ENCODE measurements at regions of chr17 and their contacts with region 1.

Region 1: DNA sequence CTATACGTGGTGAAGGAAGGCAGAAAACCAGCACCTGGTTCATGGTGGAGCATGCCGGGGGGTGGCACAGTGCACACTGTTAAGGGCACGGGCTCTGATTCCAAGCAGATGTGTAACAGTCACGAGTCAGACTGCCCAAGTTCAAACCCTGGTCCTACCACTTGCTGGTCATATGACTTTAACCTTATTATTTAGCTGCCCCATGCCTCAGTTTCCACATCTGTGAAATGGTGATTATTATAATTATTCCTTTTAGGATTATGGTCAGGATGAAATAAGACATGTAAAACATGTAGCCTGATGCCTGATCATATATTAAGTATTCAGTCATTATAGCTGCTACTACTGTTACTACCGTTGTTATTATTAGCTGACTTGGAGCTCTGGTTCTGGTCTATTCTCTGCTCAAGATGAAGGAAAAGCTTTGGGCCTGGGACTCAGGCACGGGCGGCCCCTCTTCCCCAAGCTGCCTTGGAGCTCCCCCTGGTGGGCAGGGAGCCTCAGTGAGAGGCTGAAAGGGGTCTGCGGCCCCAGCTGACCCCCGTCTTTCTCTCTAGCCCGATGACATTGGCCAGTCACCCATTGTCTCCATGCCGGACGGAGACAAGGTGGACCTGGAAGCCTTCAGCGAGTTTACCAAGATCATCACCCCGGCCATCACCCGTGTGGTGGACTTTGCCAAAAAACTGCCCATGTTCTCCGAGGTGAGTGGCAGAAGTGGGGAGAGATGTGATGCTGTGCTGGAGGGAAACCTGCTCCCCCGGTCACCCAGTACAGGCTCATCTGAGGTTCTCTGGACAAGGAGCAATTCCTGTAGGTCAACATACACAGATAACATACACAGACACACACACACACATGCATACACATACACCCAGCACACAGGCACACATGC is 14.0 kb downstream of the NR1D1 start:
- DNase-seq: peak; percentile 100
- H3K4me3 Mint-ChIP-seq: no peak overlapping the region
- H3K27ac Mint-ChIP-seq: no peak overlapping the region
- H3K4me1 Mint-ChIP-seq: no peaks in the 10 kb centered on the region
- H3K27me3 Mint-ChIP-seq: no peaks in the 10 kb centered on the region
- CTCF ChIP-seq: no peak

Region 2: GRCh38 chr17:40026816-40027613 is 59.4 kb before region 1 on chr17:
- CTCF ChIA-PET with region 1: interaction called, 40 read pairs
- intact Hi-C with region 1: loop called (anchors 1 kb)
- DNase-seq: peak; percentile 100
- H3K4me3 Mint-ChIP-seq: no peak overlapping the region
- H3K27ac Mint-ChIP-seq: no peak overlapping the region
- H3K4me1 Mint-ChIP-seq: peaks cover 30% of the 10 kb centered on the region
- H3K27me3 Mint-ChIP-seq: no peaks in the 10 kb centered on the region
- CTCF ChIP-seq: no peak

Region 3: GRCh38 chr17:40062329-40063186 is 23.8 kb before region 1 on chr17 and contains the start of gene THRA:
- CTCF ChIA-PET with region 1: interaction called, 1,006 read pairs
- intact Hi-C with region 1: loop called (anchors 1 kb)
- DNase-seq: peak; percentile 100
- H3K4me3 Mint-ChIP-seq: peak within 1 kb of the TSS; percentile 54
- H3K27ac Mint-ChIP-seq: peak within 1 kb of the TSS; percentile 27
- H3K4me1 Mint-ChIP-seq: peaks cover 55% of the 10 kb centered on the region
- H3K27me3 Mint-ChIP-seq: peaks cover 52% of the 10 kb centered on the region
- CTCF ChIP-seq: no peak
- total RNA-seq, gene THRA: 107 and 133 TPM in 2 replicates

Region 4: DNA sequence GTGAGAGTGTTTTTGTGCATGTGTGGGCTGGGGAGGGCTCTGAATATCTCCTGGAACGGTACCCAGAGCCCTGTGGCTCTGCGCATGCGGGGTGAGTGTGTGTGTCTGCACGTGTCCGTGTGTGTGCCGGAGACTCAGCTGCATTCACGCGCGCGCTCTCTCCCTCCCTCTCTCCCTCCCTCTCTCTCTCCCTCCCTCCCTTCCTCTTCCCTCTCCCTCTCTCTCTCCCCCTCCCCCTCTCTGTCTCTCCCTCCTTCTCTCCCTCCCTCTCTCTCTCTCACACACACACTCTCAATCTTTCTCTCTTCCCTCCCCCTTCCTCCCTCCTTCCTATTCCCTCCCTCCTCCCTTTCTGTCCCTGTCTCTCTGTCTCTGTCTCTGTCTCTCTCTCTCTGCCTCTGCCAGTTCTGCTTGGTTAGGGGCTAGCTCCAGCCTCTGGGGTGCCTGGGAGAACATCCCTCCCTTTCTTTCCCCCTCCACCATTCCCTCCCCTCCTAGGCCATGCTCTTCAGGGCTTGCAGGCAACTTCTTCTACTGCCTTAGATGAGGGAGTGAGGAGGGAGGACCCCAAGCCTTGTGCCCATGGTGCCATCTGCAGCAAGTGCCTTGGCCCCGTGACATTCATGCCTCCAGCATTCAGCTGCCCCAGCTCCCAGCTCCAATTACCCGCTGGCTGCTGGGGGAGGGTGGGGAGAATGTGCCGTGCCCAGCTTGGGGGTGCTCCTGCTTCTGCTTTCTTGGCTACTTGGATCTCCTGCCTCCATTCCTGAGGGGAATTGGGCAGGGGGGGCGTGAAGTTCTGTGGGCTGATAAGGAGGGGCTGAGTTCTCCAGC is 17.3 kb before region 1 on chr17:
- CTCF ChIA-PET with region 1: interaction called, 1,006 read pairs
- intact Hi-C with region 1: loop called (anchors 1 kb)
- DNase-seq: peak; percentile 71
- H3K4me3 Mint-ChIP-seq: peak overlapping the region; percentile 63
- H3K27ac Mint-ChIP-seq: no peak overlapping the region
- H3K4me1 Mint-ChIP-seq: peaks cover 94% of the 10 kb centered on the region
- H3K27me3 Mint-ChIP-seq: no peaks in the 10 kb centered on the region
- CTCF ChIP-seq: no peak

Region 5: DNA sequence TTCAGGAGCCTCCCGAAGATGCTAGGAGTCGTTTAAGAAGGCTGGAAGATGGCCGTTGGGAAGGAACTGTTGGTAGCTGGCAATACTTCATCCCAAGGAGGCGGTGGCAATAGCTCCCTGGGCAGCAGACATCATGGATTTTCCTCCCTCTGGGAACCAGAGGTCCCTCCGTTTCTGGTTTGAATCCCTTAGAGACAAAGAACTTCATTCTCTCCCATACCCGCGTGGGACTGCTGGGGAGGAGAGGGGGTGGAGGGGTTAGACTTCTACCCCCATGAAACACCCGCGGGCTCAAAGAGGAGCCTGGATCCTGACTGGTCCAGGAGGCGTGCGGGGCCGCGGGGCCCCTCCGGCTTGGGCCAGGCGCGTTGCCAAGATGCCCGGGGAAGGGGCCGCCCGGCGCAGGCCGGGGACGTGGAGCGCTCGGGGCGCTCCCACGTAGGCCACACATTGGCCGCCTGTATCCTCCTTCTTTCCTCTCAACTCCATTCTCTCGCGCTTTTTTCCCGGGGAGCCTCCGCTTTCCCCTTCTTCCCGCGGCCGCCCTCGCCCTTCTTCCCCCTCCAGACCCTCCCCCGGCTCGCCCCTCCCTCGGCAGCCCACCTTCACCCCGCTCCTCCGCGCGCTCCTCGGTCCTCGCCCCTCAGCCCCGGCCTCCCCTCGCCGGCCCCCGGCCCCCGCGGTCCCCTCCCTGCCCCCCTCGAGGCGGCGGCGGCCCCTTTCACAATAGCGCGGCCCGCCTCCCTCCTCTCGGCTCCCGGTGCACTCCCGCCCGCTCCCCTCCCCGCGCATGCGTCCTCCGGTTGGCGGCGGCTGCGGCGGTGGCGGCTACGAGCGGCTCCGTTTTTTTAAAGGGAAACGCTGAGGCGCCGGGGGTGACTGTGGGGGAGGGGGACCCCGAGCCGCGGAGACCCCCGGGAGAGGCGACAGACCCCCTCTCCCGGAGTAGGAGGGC is 35.1 kb after region 1 on chr17 and contains the start of gene MSL1:
- CTCF ChIA-PET with region 1: interaction called, 13 read pairs
- intact Hi-C with region 1: no loop called
- DNase-seq: peak; percentile 100
- H3K4me3 Mint-ChIP-seq: peak within 1 kb of the TSS; percentile 86
- H3K27ac Mint-ChIP-seq: peak within 1 kb of the TSS; percentile 53
- H3K4me1 Mint-ChIP-seq: peaks cover 48% of the 10 kb centered on the region
- H3K27me3 Mint-ChIP-seq: no peaks in the 10 kb centered on the region
- CTCF ChIP-seq: no peak
- total RNA-seq, gene MSL1: 505 and 524 TPM in 2 replicates